ENCODE measurements at regions of chr13 and their contacts with region 1.

Region 1: DNA sequence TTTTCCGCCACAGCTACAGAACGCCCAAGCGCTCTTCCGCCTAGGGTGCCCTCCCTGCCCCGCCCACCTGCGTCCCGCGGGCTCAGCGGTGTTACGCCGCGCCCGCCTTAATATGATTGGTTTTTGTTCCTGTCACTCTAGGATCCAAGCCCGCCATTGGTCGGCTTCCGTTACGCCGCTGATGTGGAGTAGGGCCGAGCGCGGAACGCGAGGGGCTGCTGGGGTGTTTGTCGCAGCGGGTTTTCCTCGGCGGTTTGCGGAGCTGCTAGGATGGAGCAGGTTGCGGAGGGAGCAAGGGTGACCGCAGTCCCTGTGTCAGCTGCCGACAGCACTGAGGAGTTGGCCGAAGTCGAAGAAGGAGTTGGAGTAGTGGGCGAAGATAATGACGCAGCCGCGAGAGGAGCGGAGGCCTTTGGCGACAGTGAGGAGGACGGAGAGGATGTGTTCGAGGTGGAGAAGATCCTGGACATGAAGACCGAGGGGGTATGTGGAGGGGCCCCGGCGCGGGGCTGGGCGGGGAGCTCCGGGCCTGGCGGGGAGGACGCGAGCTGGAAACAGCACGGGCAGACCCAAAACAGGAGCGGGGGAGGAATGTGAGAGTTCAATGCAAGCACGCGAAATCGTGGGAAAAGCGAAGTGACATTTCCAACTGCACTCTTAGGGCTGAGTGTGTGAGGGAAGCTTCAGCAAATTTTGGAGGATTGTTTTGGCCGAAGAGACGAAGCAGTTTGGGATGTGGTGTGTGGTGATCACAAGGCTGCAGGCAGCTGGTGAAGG is at the start of gene MPHOSPH8:
- DNase-seq: peak; percentile 93 to 94
- ATAC-seq: peak; percentile 98 to 99
- H3K4me3 ChIP-seq: peak within 1 kb of the TSS; percentile 63 to 93 (median 88)
- H3K27ac ChIP-seq: peak within 1 kb of the TSS; percentile 87 to 97 (median 93)
- H3K4me1 ChIP-seq: peaks cover 19 to 22% of the 10 kb centered on the region in 2 donors
- H3K27me3 ChIP-seq: no peaks in the 10 kb centered on the region
- CTCF ChIP-seq: no peak
- POLR2A ChIP-seq: peak; percentile 86 to 87
- total RNA-seq, gene MPHOSPH8: 8.0 to 15.5 (median 13.4) TPM

Region 2: DNA sequence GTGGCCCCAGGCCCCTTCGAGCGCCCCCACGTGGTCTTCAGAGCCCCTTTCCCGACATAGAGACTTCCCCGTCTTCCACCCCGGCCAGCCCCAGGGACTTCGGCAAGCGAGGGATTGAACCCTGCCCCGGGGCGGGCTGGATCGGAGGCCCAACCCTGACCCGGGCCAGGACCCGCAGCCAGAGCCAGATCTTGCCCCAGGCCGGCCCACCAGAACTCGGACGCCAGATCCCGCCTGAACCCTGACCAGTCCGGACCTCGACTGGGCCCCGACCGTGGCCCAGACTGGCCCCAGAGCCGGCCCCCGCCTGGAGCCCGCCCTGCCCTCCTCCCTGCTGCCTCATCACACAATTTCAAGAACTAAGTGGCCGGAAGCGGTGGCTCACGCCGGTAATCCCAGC is 72.1 kb before region 1 on chr13:
- in situ Hi-C with region 1: no loop called
- intact Hi-C with region 1: no loop called
- DNase-seq: no peak
- ATAC-seq: no peak
- H3K4me3 ChIP-seq: no peak overlapping the region
- H3K27ac ChIP-seq: no peak overlapping the region
- H3K4me1 ChIP-seq: no peaks in the 10 kb centered on the region
- H3K27me3 ChIP-seq: peaks cover 0 to 9% (median 5%) of the 10 kb centered on the region in 3 donors
- CTCF ChIP-seq: no peak
- POLR2A ChIP-seq: no peak

Region 3: GRCh38 chr13:19782049-19782726 is 148.5 kb after region 1 on chr13:
- in situ Hi-C with region 1: no loop called
- intact Hi-C with region 1: loop called (anchors 1 kb)
- DNase-seq: peak; percentile 15 to 47
- ATAC-seq: peak; percentile 73 to 81
- H3K4me3 ChIP-seq: peak overlapping the region; percentile 81 to 99 (median 92)
- H3K27ac ChIP-seq: peak overlapping the region; percentile 89 to 98 (median 94)
- H3K4me1 ChIP-seq: peaks cover 3 to 9% of the 10 kb centered on the region in 2 donors
- H3K27me3 ChIP-seq: no peaks in the 10 kb centered on the region
- CTCF ChIP-seq: no peak
- POLR2A ChIP-seq: no peak